ENCODE measurements at regions of chr15 and their contacts with region 1.

Region 1: DNA sequence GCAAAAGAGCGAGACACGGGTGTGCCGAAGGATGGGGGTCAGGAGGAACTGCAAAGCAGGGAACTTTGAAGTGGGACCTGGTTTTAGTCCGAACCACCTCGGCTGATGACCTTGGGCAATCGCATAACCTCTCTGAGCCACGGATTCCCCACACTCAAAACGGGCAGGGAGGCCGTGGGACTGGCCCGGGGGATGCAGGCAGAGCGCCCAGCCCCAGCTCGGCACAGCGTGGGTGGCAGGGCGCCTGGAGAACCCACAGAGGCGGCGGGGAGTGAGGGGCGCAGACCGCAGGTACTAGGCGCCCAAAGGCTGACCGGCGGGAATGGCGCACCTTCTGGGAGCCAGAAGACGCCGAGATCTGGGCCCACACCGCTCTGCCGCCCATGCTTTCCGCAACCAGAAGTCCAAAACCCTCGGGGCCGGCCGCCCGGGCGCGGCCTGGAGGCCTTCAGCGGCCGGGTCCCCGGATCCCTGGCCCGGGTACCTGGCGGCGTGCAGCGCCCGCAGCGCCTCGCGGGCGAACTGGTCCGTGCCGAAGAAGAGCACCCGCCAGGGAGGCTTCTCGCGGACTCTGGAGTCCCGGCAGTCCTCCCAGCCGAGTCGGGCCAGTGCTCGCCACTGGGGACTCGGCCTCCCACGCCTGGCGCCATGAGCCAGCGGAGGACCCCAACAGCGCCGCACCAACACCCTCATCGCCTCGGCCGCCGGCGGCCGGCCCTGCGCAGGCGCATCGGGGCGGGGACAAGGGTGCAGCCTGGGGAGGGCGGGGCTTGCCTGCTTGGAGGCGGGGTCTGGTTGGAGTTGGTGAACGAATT is at the start of gene MTFMT:
- DNase-seq: peak; percentile 88 to 97
- ATAC-seq: peak; percentile 65 to 83
- H3K4me3 ChIP-seq: peak within 1 kb of the TSS; percentile 73
- H3K27ac ChIP-seq: peak within 1 kb of the TSS; percentile 93 to 96
- H3K4me1 ChIP-seq: peaks cover 32% of the 10 kb centered on the region
- CTCF ChIP-seq: peak; percentile 18; the same call in 1 of the 3 replicates
- EP300 ChIP-seq: no peak
- POLR2A ChIP-seq: peak; percentile 99
- RAD21 ChIP-seq: no peak
- polyA plus RNA-seq, gene MTFMT: 23.4 and 25.2 TPM in 2 replicates

Region 2: DNA sequence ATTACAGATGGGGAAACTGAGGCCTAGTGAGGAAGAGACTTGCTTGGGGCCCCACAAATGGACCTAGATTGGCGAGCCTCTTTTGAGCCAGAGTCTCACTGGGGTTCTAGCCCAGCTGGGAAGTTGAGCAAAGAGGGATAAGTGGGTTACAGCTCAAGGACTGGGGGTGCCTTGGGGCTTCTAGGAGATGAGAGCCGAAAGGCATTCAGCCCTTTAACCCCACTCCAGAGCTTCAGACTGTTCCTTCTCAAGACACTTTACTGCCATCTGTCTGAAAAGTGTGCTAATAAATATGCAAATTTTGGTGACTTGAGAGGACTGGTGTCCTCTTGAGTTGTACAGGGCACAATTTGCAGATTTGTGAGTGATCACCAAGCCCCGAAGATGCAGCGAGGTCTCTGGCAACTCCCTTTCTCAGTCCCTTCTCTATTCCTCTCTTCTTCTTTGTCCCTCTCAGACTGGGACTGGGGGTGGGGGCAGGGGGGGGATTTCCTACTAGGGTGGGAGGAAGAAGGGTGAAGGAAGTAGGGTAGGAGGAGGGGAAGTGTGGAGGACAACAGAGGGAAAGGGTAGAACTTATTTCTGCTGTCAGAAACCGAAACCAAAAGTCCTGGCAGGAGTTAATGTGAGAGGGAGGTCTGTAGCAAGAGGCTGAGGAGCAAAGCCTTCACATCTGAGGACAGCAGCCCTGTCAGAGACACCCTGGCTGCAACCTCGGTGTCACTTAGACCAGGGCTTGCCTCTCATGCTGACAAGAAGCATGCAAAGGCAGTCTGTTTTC is 133.7 kb before region 1 on chr15:
- CTCF ChIA-PET with region 1: no interaction called
- POLR2A ChIA-PET with region 1: no interaction called
- DNase-seq: no peak
- ATAC-seq: peak; percentile 21 to 33; a peak in 3 of 6 replicates
- H3K4me3 ChIP-seq: no peak overlapping the region
- H3K27ac ChIP-seq: peak overlapping the region in 1 of 2 experiments; percentile 39; a peak in 1 of 6 replicates
- H3K4me1 ChIP-seq: peaks cover 10% of the 10 kb centered on the region; the same call in 2 of the 3 replicates
- CTCF ChIP-seq: no peak
- EP300 ChIP-seq: no peak
- POLR2A ChIP-seq: no peak
- RAD21 ChIP-seq: no peak

Region 3: DNA sequence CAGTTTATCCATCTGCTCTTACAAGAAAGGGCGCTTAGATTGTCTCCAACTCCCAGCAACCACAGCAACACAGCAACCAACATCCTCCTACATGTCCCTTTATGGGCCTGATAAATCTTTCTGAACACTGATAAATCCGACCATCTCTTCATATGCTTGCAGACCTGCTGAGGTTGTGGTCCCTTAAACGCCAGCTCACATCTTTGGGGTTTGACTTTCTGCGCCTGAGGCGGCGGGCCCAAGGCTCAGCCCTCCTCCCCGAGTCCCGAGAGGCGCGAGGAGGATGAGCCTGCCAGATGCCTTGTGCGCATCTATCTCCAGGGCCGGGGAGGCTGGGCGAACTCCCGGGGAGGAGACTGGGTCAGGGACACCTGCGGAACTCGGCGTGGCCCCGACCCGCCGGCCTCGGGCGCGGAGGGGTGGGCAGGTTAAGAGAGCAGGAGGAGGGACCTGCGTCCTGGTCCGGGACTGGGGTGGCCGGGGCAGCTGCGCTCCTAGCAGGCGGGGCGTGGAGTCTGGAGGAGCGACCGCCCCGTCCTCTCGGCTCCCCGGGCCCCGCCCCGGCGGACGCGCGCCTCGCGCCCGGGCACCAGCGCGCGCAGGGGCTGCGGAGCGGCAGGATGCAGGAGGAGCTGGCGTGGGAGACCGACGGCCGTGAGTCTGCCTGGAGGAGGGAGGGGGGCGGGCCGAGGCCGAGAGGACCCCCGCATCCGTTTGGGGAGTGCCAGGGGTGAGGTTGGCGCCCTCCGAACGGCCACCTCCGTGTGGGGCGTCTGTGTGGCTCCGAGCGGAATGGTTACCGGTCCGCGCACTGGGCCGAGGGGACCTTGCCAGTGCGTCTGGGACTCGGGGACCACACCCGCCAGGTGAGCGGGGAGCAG is 117.6 kb before region 1 on chr15 and contains the start of gene ANKDD1A:
- CTCF ChIA-PET with region 1: no interaction called
- POLR2A ChIA-PET with region 1: no interaction called
- DNase-seq: peak; percentile 70 to 94
- ATAC-seq: peak; percentile 94 to 97
- H3K4me3 ChIP-seq: peak within 1 kb of the TSS; percentile 46
- H3K27ac ChIP-seq: peak within 1 kb of the TSS; percentile 56 to 84
- H3K4me1 ChIP-seq: peaks cover 6% of the 10 kb centered on the region; the same call in 2 of the 3 replicates
- CTCF ChIP-seq: no peak
- EP300 ChIP-seq: no peak
- POLR2A ChIP-seq: peak; percentile 62
- RAD21 ChIP-seq: peak in 1 of 2 experiments; percentile 16; a peak in 2 of 5 replicates
- polyA plus RNA-seq, gene ANKDD1A: 2.7 and 3.3 TPM in 2 replicates

Region 4: DNA sequence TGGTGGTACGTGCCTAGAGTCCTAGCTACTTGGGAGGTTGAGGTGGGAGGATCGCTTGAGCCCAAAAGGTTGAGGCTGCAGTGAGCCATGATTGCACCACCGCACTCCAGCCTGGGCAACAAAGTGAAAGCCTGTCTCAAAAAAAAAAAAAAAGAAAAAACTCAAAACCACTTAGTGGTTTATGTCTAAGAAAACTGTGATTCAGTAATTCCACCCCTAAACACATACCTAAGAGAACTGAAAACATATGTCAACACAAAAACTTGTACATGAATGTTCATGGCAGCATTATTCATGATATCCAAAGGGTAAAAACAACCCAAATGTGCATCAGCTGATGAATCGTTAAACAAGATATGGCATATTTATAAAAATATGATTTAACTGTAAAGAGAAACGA is 53.7 kb before region 1 on chr15:
- CTCF ChIA-PET with region 1: no interaction called
- POLR2A ChIA-PET with region 1: no interaction called
- DNase-seq: no peak
- ATAC-seq: no peak
- H3K4me3 ChIP-seq: no peak overlapping the region
- H3K27ac ChIP-seq: no peak overlapping the region
- H3K4me1 ChIP-seq: no peaks in the 10 kb centered on the region
- CTCF ChIP-seq: no peak
- EP300 ChIP-seq: no peak
- POLR2A ChIP-seq: no peak
- RAD21 ChIP-seq: no peak

Region 5: DNA sequence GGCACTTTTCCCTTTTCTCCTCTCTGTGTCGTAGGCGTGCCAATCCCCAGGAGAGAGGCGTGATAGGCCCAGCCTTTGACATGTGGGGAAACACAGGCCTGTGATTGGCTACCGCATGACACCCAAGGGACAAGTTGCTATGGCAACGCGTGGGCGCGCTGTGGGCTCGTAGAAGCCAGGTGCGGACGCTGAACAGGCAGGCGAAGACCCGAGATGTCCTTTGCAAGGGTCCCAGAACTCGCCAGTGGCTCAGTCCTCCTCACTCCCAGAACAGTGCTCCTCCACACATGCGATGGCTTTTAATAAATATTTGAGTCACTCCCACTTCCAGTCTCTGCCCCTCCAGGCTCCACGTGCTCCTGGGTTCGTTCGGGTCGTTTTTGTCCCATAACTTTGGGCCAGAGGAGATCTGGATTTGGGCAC is 20.3 kb after region 1 on chr15:
- CTCF ChIA-PET with region 1: interaction called, 101 read pairs
- POLR2A ChIA-PET with region 1: no interaction called
- DNase-seq: peak; percentile 86 to 90
- ATAC-seq: peak; percentile 68 to 79
- H3K4me3 ChIP-seq: peak overlapping the region; percentile 31
- H3K27ac ChIP-seq: no peak overlapping the region; a peak in 1 of 6 replicates
- H3K4me1 ChIP-seq: peaks cover 33% of the 10 kb centered on the region
- CTCF ChIP-seq: no peak
- EP300 ChIP-seq: no peak
- POLR2A ChIP-seq: no peak
- RAD21 ChIP-seq: no peak

Region 6: DNA sequence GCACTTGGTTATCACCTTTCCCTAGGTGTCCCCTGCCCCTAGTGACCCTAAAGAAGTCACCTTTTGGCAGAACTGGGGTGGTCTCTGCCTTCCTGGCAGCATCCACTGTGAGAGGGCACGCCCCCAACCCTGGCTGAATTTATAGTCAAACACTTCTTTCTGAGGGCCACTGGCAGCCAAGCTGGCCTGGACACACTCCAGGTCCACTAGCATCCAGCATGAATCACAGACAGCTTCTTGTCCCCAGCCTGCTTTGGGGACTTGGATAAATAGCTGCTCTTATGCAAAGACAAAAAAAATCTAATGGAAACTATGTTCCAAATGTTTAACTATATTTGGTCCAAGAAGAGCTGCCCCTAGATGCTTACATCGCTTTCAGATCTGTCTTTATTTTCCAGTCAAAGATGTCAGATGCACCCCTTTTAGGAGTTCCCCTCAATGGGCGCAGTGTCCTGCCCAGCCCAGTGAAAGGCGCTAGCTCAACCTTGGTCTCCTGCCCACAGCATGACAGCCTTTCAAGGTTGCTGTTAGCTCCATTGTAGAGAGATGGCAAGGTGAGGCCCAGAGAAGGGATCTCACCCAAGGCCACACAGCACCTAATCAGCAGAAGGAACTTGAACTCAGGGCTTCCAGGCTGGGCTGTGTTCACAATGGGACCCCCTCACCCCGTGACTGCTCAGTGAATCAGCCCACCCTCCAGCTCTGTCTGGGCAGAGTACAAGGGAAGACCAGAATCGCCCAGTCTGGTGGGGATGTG is 31.7 kb after region 1 on chr15:
- CTCF ChIA-PET with region 1: interaction called, 101 read pairs
- POLR2A ChIA-PET with region 1: no interaction called
- DNase-seq: no peak
- ATAC-seq: no peak
- H3K4me3 ChIP-seq: no peak overlapping the region
- H3K27ac ChIP-seq: no peak overlapping the region
- H3K4me1 ChIP-seq: peaks cover 26% of the 10 kb centered on the region
- CTCF ChIP-seq: no peak
- EP300 ChIP-seq: no peak
- POLR2A ChIP-seq: no peak
- RAD21 ChIP-seq: no peak

Region 7: DNA sequence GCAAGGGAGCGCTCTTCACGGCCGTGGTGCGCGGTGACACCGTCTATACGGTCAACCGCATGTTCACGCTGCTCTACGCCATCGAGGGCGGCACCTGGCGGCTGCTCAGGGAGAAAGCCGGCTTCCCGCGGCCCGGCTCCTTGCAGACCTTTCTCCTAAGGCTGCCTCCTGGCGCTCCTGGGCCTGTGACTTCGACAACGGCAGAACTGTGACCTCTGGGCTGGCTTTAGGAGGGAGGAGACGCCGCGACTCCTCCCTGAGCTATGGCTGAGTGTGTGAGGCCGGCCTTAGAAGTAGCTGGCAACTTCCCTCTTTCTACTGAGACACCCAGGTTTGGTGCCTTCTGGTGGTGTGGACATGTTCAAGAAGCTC is 48.8 kb after region 1 on chr15:
- CTCF ChIA-PET with region 1: interaction called, 254 read pairs
- POLR2A ChIA-PET with region 1: no interaction called
- DNase-seq: peak; percentile 91 to 92
- ATAC-seq: peak; percentile 93 to 98
- H3K4me3 ChIP-seq: no peak overlapping the region
- H3K27ac ChIP-seq: peak overlapping the region; percentile 17 to 65; a peak in 5 of 6 replicates
- H3K4me1 ChIP-seq: peaks cover 7% of the 10 kb centered on the region; the same call in 1 of the 3 replicates
- CTCF ChIP-seq: peak; percentile 93
- EP300 ChIP-seq: no peak
- POLR2A ChIP-seq: no peak
- RAD21 ChIP-seq: peak; percentile 84 to 95

Region 8: GRCh38 chr15:65094294-65094995 is 65.3 kb after region 1 on chr15:
- CTCF ChIA-PET with region 1: interaction called, 17 read pairs
- POLR2A ChIA-PET with region 1: no interaction called
- DNase-seq: no peak
- ATAC-seq: no peak; a peak in 1 of 6 replicates
- H3K4me3 ChIP-seq: no peak overlapping the region
- H3K27ac ChIP-seq: no peak overlapping the region
- H3K4me1 ChIP-seq: no peaks in the 10 kb centered on the region
- CTCF ChIP-seq: no peak
- EP300 ChIP-seq: no peak
- POLR2A ChIP-seq: no peak
- RAD21 ChIP-seq: no peak

Region 9: GRCh38 chr15:65264863-65265430 is 235.8 kb after region 1 on chr15:
- CTCF ChIA-PET with region 1: interaction called, 24 read pairs
- POLR2A ChIA-PET with region 1: no interaction called
- DNase-seq: no peak
- ATAC-seq: 0 out of 6 replicates have a peak, but pooled peaks of 1 of the 2 experiments have one; percentile 13
- H3K4me3 ChIP-seq: no peak overlapping the region
- H3K27ac ChIP-seq: no peak overlapping the region
- H3K4me1 ChIP-seq: no peaks in the 10 kb centered on the region
- CTCF ChIP-seq: no peak
- EP300 ChIP-seq: no peak
- POLR2A ChIP-seq: no peak
- RAD21 ChIP-seq: no peak